ENCODE measurements at regions of chr20 and their contacts with region 1.

Region 1: GRCh38 chr20:25065625-25066338 is 7.8 kb upstream of the ACSS1 start:
- DNase-seq: peak; percentile 67
- H3K4me3 ChIP-seq: no peak overlapping the region
- H3K27ac ChIP-seq: no peak overlapping the region
- H3K4me1 ChIP-seq: no peaks in the 10 kb centered on the region
- H3K27me3 ChIP-seq: peaks cover 7 to 10% of the 10 kb centered on the region in 2 experiments
- CTCF ChIP-seq: peak; percentile 59 to 71
- POLR2A ChIP-seq: no peak

Region 2: GRCh38 chr20:25178563-25179438 is 113.0 kb after region 1 on chr20:
- CTCF ChIA-PET with region 1: interaction called, 4 read pairs
- POLR2A ChIA-PET with region 1: no interaction called
- dilution Hi-C with region 1: no loop called
- intact Hi-C with region 1: loop called (anchors 1 kb)
- DNase-seq: peak; percentile 65
- H3K4me3 ChIP-seq: no peak overlapping the region
- H3K27ac ChIP-seq: no peak overlapping the region
- H3K4me1 ChIP-seq: peaks cover 2% of the 10 kb centered on the region
- H3K27me3 ChIP-seq: peaks cover 0 to 2% of the 10 kb centered on the region in 2 experiments
- CTCF ChIP-seq: peak; percentile 46 to 55
- POLR2A ChIP-seq: no peak